Naive thymus-derived CD8-positive, alpha-beta T cell (primary cell): ENCODE measurements at regions of chr3 and their contacts with region 1.

Region 1: GRCh38 chr3:43180027-43180426 is 74.1 kb upstream of the POMGNT2 start:
- DNase-seq: peak in 6 of 10 donors; percentile 25 to 67 (median 52)
- ATAC-seq: peak; percentile 94 to 97
- H3K4me3 Mint-ChIP-seq: peak overlapping the region; percentile 57 to 91 (median 78)
- H3K27ac Mint-ChIP-seq: peak overlapping the region; percentile 80 to 97 (median 93)
- H3K4me1 Mint-ChIP-seq: peaks cover 41 to 82% (median 69%) of the 10 kb centered on the region in 4 donors
- H3K27me3 Mint-ChIP-seq: no peaks in the 10 kb centered on the region

Region 2: GRCh38 chr3:43190666-43191065 is 10.6 kb after region 1 on chr3:
- POLR2A ChIA-PET with region 1: interaction called, 60 read pairs
- DNase-seq: no peak
- ATAC-seq: no peak
- H3K4me3 Mint-ChIP-seq: no peak overlapping the region
- H3K27ac Mint-ChIP-seq: peak overlapping the region in 4 of 10 donors; percentile 8 to 49 (median 25)
- H3K4me1 Mint-ChIP-seq: peaks cover 43 to 60% (median 44%) of the 10 kb centered on the region in 4 donors
- H3K27me3 Mint-ChIP-seq: no peaks in the 10 kb centered on the region

Region 3: DNA sequence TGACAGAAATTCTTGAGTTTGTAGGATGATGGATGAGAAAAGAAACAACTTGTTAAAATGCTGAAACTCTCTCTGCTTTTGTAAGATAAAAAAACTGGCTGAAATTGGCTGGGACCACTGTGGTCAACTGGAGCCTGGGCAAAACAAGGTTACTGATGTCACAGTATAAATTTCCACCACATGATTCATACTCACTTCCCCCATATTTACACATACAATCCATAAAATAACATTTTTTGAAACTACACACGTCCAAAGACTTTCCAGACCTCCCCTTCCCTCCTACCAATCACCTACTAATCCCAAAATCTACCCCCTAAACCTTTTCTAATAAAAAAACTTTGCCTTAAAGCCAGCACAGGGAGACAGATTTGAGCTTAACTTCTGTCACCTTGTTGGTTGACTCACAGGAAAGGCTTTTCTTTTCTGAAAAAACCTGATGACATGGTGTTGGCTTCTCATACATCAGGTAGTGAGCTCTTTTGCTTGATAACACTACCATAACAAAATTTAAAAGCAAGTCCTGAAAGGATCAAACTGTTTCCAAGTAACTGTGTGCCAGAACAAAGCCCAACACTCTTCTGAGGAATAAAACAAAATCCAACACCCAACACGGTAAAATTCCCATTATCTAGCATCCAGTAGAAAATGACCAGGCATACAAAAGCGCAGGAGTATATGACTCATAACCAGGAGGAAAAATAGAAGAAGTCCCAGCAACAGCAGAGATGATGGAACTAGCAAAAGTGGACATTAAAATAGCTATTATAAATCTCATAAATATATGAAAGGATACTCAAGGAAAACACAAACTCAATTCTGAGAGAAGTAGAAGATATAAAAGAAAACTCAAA is 19.0 kb after region 1 on chr3:
- POLR2A ChIA-PET with region 1: interaction called, 60 read pairs
- DNase-seq: no peak
- ATAC-seq: no peak
- H3K4me3 Mint-ChIP-seq: peak overlapping the region in 6 of 10 donors; percentile 5 to 69 (median 41)
- H3K27ac Mint-ChIP-seq: peak overlapping the region in 6 of 10 donors; percentile 9 to 98 (median 50)
- H3K4me1 Mint-ChIP-seq: peaks cover 45 to 71% (median 61%) of the 10 kb centered on the region in 4 donors
- H3K27me3 Mint-ChIP-seq: peaks cover 0 to 1% (median 0%) of the 10 kb centered on the region in 5 donors

Region 4: DNA sequence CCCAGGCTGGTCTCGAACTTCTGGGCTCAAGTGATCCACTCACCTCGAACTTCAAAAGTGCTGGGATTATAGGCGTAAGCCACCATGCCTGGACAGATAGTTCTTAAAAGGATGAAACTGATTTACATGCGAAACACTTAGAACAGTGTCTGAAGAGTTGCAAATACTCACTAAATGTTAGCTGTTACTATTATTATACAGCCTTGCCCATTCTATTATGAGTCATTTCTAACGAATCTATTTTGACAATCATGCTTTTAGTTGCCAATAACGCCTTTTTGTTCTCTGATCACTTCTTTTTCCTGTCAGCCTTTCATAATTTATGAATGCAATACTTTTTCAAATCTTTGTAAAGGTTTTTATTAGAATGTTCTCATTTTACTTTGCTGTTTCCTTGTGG is 219.0 kb after region 1 on chr3:
- POLR2A ChIA-PET with region 1: no interaction called
- DNase-seq: no peak
- ATAC-seq: no peak
- H3K4me3 Mint-ChIP-seq: no peak overlapping the region
- H3K27ac Mint-ChIP-seq: peak overlapping the region in 1 of 10 donors; percentile 52
- H3K4me1 Mint-ChIP-seq: peaks cover 5 to 14% (median 6%) of the 10 kb centered on the region in 4 donors
- H3K27me3 Mint-ChIP-seq: no peaks in the 10 kb centered on the region

Region 5: DNA sequence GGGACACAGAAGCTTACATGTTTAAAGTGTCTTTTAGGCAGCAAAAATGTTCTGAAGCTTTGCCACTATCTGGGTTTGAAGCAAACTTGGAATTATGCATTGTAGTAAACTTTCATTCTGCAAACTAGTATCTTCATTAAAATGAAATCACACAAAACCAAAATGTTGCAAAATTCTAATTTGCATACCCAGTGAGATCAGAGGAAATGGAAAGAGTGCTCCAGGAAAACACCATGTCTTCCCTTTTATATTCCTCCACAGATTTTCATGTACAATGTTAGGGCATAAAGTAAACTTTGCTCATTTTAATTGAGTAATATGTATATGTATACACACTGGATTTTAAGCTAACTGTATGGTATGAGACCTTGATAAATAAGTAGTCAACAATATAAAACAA is 417.9 kb after region 1 on chr3:
- POLR2A ChIA-PET with region 1: no interaction called
- DNase-seq: no peak
- ATAC-seq: no peak
- H3K4me3 Mint-ChIP-seq: no peak overlapping the region
- H3K27ac Mint-ChIP-seq: no peak overlapping the region
- H3K4me1 Mint-ChIP-seq: peaks cover 0 to 8% (median 0%) of the 10 kb centered on the region in 4 donors
- H3K27me3 Mint-ChIP-seq: no peaks in the 10 kb centered on the region